Naive thymus-derived CD4-positive, alpha-beta T cell (primary cell): ENCODE measurements at regions of chr7 and their contacts with region 1.

Region 1: DNA sequence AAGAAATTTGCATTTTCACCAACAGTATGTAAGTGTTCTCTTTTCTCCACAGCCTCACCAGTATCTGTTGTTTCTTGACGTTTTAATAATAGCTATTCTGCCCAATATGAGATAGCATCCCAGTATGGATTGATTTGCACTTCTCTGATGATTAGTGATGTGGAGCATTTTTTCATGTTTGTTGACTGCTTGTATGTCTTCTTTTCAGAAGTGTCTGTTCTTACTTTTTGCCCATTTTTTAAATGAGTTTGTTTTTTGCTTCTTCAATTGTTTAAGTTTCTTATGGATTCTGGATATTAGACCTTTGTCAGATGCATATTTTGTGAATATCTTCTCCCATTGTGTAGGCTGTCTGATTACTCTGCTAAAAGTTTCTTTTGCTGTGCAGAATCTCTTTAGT is 12.2 kb upstream of the TPK1 start:
- DNase-seq: no peak
- ATAC-seq: no peak
- H3K4me3 ChIP-seq: no peak overlapping the region
- H3K4me3 Mint-ChIP-seq: no peak overlapping the region
- H3K27ac ChIP-seq: no peak overlapping the region
- H3K27ac Mint-ChIP-seq: no peak overlapping the region
- H3K4me1 ChIP-seq: no peaks in the 10 kb centered on the region
- H3K4me1 Mint-ChIP-seq: no peaks in the 10 kb centered on the region
- H3K27me3 ChIP-seq: peaks cover 0 to 2% of the 10 kb centered on the region in 2 donors
- H3K27me3 Mint-ChIP-seq: no peaks in the 10 kb centered on the region

Region 2: DNA sequence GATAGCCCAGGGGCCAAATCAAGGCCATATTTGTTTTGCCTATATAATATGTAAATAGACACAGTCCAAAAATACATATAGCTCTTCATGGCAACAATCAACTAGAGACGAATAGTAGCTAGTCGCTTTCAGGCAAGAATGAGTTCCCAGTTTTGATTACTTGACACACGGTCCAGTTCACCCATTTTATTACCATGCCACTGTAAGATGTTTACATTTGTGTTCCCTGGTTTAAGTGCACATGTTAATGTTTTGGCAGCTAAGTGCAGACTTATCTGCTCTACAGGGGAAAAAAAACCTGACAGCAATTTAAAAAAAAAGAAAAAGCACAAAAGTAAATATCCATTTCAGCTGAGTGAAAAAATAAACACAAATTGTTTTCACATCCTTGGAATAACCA is 225.3 kb before region 1 on chr7:
- CTCF ChIA-PET with region 1: no interaction called
- POLR2A ChIA-PET with region 1: no interaction called
- intact Hi-C with region 1: no loop called
- DNase-seq: no peak
- ATAC-seq: no peak
- H3K4me3 ChIP-seq: no peak overlapping the region
- H3K4me3 Mint-ChIP-seq: no peak overlapping the region
- H3K27ac ChIP-seq: no peak overlapping the region
- H3K27ac Mint-ChIP-seq: no peak overlapping the region
- H3K4me1 ChIP-seq: no peaks in the 10 kb centered on the region
- H3K4me1 Mint-ChIP-seq: peaks cover 0 to 2% (median 0%) of the 10 kb centered on the region in 7 donors
- H3K27me3 ChIP-seq: no peaks in the 10 kb centered on the region
- H3K27me3 Mint-ChIP-seq: no peaks in the 10 kb centered on the region

Region 3: GRCh38 chr7:144709066-144709465 is 139.0 kb before region 1 on chr7:
- CTCF ChIA-PET with region 1: no interaction called
- POLR2A ChIA-PET with region 1: no interaction called
- intact Hi-C with region 1: no loop called
- DNase-seq: no peak
- ATAC-seq: no peak
- H3K4me3 ChIP-seq: no peak overlapping the region
- H3K4me3 Mint-ChIP-seq: no peak overlapping the region
- H3K27ac ChIP-seq: no peak overlapping the region
- H3K27ac Mint-ChIP-seq: no peak overlapping the region
- H3K4me1 ChIP-seq: no peaks in the 10 kb centered on the region
- H3K4me1 Mint-ChIP-seq: peaks cover 7 to 31% (median 18%) of the 10 kb centered on the region in 7 donors
- H3K27me3 ChIP-seq: no peaks in the 10 kb centered on the region
- H3K27me3 Mint-ChIP-seq: no peaks in the 10 kb centered on the region

Region 4: DNA sequence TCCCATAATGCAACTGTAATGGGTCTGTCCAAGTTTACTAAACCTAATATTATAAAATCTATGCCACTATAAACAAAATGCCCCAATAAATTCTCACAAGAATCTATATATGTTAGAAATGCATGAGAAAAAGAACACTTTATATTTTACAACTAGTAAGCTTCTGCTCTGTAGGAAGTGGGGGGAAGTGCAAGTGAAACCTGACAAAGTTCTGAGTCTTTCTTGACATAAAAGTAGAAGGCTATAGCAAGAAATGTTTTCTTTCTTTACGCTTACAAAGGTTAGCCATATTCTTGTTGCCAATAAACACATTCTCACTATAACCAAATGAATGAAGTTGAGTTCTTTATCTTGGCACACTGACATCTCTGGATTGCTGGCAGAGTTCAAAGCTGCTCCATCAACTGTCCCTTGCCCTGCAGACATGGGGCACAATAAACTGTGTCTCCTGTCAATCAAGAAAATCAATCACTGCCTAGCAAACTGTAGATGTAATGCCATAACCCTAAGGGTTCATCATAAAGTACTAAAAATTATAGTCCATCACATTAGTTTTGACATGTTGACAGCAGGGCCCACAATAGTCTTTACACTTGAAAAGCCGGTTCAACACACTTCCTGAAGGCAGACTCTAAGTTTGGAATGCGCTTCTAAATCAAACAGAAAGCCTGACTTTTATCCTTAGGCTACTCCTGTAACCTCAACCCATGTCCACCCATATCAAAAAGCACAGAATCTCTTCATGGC is 70.9 kb before region 1 on chr7:
- CTCF ChIA-PET with region 1: no interaction called
- POLR2A ChIA-PET with region 1: no interaction called
- intact Hi-C with region 1: no loop called
- DNase-seq: peak in 4 of 9 donors; percentile 5 to 27 (median 16)
- ATAC-seq: no peak
- H3K4me3 ChIP-seq: no peak overlapping the region
- H3K4me3 Mint-ChIP-seq: peak overlapping the region in 6 of 10 donors; percentile 11 to 65 (median 44)
- H3K27ac ChIP-seq: no peak overlapping the region
- H3K27ac Mint-ChIP-seq: peak overlapping the region in 5 of 9 donors; percentile 34 to 83 (median 36)
- H3K4me1 ChIP-seq: peaks cover 0 to 11% of the 10 kb centered on the region in 2 donors
- H3K4me1 Mint-ChIP-seq: peaks cover 12 to 66% (median 41%) of the 10 kb centered on the region in 7 donors
- H3K27me3 ChIP-seq: no peaks in the 10 kb centered on the region
- H3K27me3 Mint-ChIP-seq: no peaks in the 10 kb centered on the region

Region 5: GRCh38 chr7:144812379-144813283 is 35.4 kb before region 1 on chr7:
- CTCF ChIA-PET with region 1: no interaction called
- POLR2A ChIA-PET with region 1: no interaction called
- intact Hi-C with region 1: loop called in 1 of 2 experiments (anchors 5 kb)
- DNase-seq: peak in 7 of 9 donors; percentile 65 to 79 (median 74)
- ATAC-seq: peak; percentile 94
- H3K4me3 ChIP-seq: peak overlapping the region; percentile 22
- H3K4me3 Mint-ChIP-seq: peak overlapping the region; percentile 63 to 85 (median 78)
- H3K27ac ChIP-seq: peak overlapping the region; percentile 71
- H3K27ac Mint-ChIP-seq: peak overlapping the region; percentile 77 to 95 (median 92)
- H3K4me1 ChIP-seq: peaks cover 20 to 50% of the 10 kb centered on the region in 2 donors
- H3K4me1 Mint-ChIP-seq: peaks cover 36 to 92% (median 84%) of the 10 kb centered on the region in 7 donors
- H3K27me3 ChIP-seq: no peaks in the 10 kb centered on the region
- H3K27me3 Mint-ChIP-seq: no peaks in the 10 kb centered on the region